Activated naive CD4-positive, alpha-beta T cell treated with anti-CD3 and anti-CD28 coated beads for 36 hours (primary cell): ENCODE measurements at regions of chr6 and their contacts with region 1.

Region 1: GRCh38 chr6:24774696-24775519 is at the start of gene GMNN:
- DNase-seq: peak; percentile 99
- H3K4me3 Mint-ChIP-seq: peak within 1 kb of the TSS; percentile 96
- H3K27ac Mint-ChIP-seq: peak within 1 kb of the TSS; percentile 98
- H3K4me1 Mint-ChIP-seq: peaks cover 30% of the 10 kb centered on the region
- H3K27me3 Mint-ChIP-seq: no peaks in the 10 kb centered on the region
- total RNA-seq, gene GMNN: 84.9 to 85.1 TPM

Region 2: GRCh38 chr6:24402697-24403501 is 372.0 kb before region 1 on chr6 and contains the start of gene MRS2:
- CTCF ChIA-PET with region 1: no interaction called
- intact Hi-C with region 1: loop called (anchors 10 kb)
- DNase-seq: peak; percentile 76
- H3K4me3 Mint-ChIP-seq: peak within 1 kb of the TSS; percentile 86
- H3K27ac Mint-ChIP-seq: peak within 1 kb of the TSS; percentile 36
- H3K4me1 Mint-ChIP-seq: peaks cover 30% of the 10 kb centered on the region
- H3K27me3 Mint-ChIP-seq: peaks cover 9% of the 10 kb centered on the region
- total RNA-seq, gene MRS2: 18.9 to 19.8 TPM

Region 3: GRCh38 chr6:24666641-24667377 is 108.1 kb before region 1 on chr6 and contains the starts of genes ACOT13 and TDP2:
- CTCF ChIA-PET with region 1: no interaction called
- intact Hi-C with region 1: loop called (anchors 1 kb)
- DNase-seq: peak; percentile 97
- H3K4me3 Mint-ChIP-seq: peak within 1 kb of the TSS; percentile 90
- H3K27ac Mint-ChIP-seq: peak within 1 kb of the TSS; percentile 95
- H3K4me1 Mint-ChIP-seq: peaks cover 35% of the 10 kb centered on the region
- H3K27me3 Mint-ChIP-seq: no peaks in the 10 kb centered on the region
- total RNA-seq, gene ACOT13: 34.0 to 36.1 TPM
- total RNA-seq, gene TDP2: 41.5 to 44.2 TPM

Region 4: GRCh38 chr6:24788048-24788665 is 13.2 kb after region 1 on chr6:
- CTCF ChIA-PET with region 1: no interaction called
- intact Hi-C with region 1: loop called (anchors 1 kb)
- DNase-seq: peak; percentile 27
- H3K4me3 Mint-ChIP-seq: no peak overlapping the region
- H3K27ac Mint-ChIP-seq: no peak overlapping the region
- H3K4me1 Mint-ChIP-seq: peaks cover 27% of the 10 kb centered on the region
- H3K27me3 Mint-ChIP-seq: no peaks in the 10 kb centered on the region

Region 5: DNA sequence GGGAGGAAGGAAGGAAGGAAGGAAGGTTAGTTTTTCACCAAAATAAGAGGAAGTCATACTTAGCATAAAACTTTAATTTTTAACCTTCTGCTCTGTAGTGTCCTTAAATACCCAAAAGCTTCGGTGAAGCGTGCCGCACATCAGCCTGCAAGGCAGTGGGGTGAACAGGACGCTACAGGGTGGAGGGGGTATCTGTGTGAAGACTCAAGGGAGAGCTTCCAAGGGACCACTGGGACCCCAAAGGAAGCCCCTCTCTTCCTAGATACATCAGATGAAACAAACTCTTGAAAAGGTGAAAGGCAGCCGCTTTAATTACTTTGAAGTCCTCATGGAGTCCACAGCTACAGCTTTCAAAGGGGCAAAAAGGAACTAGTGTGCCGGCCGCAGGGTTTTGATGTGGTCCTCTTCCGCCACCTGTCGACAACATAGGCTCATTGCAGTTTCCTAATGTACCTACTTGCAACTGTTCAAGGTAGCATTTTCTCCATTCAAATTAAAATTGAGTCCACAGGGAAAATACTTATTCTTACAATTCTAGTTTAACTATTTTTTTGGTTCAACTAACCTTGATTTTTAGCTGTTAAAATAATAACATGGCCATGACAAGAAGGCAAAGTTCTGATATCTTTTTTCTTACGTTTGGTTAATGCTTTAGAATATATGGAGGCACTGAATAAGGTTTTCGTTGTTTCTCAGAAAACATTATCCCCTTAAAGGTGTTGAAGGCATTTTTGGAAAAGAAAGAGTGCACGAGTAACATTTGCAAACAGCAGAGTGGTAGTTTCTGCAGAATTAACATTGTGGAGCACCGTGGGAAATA is 295.8 kb after region 1 on chr6:
- CTCF ChIA-PET with region 1: no interaction called
- intact Hi-C with region 1: loop called (anchors 2 kb)
- DNase-seq: peak; percentile 91
- H3K4me3 Mint-ChIP-seq: peak overlapping the region; percentile 38
- H3K27ac Mint-ChIP-seq: peak overlapping the region; percentile 70
- H3K4me1 Mint-ChIP-seq: peaks cover 10% of the 10 kb centered on the region
- H3K27me3 Mint-ChIP-seq: no peaks in the 10 kb centered on the region